Left lung (tissue), 14 donors: ENCODE measurements at regions of chr21 and their contacts with region 1.

Region 1: GRCh38 chr21:32257962-32258785 is 20.7 kb downstream of the MIS18A start:
- DNase-seq: peak in 3 of 4 donors; percentile 50 to 85 (median 67)
- ATAC-seq: peak; percentile 95
- H3K4me3 ChIP-seq: no peak overlapping the region
- H3K27ac ChIP-seq: no peak overlapping the region
- H3K4me1 ChIP-seq: no peaks in the 10 kb centered on the region
- H3K27me3 ChIP-seq: no peaks in the 10 kb centered on the region
- CTCF ChIP-seq: peak; percentile 51 to 61

Region 2: DNA sequence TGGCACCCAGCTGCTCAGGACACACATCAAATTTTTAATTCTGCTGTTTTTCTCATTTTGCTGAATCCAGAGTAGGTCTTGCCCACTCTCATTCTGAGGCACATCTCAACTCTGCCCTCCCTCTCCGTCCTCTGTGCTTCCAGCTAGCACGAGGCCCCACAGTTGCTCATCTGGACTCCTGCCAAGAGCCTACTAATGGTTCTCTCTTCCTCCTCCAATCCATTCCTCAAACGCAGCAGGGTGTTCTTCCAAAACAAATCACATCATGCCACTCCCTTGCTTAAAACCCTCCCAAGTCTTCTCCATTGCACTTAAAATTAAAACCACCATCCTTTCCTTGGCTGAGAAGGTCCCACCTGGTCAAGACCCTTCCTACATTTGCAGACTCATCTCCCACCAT is 476.4 kb before region 1 on chr21:
- intact Hi-C with region 1: loop called in 1 of 2 experiments (anchors 10 kb)
- DNase-seq: peak in 2 of 4 donors; percentile 39 to 64
- ATAC-seq: peak; percentile 13
- H3K4me3 ChIP-seq: no peak overlapping the region
- H3K27ac ChIP-seq: no peak overlapping the region
- H3K4me1 ChIP-seq: no peaks in the 10 kb centered on the region
- H3K27me3 ChIP-seq: no peaks in the 10 kb centered on the region
- CTCF ChIP-seq: no peak

Region 3: DNA sequence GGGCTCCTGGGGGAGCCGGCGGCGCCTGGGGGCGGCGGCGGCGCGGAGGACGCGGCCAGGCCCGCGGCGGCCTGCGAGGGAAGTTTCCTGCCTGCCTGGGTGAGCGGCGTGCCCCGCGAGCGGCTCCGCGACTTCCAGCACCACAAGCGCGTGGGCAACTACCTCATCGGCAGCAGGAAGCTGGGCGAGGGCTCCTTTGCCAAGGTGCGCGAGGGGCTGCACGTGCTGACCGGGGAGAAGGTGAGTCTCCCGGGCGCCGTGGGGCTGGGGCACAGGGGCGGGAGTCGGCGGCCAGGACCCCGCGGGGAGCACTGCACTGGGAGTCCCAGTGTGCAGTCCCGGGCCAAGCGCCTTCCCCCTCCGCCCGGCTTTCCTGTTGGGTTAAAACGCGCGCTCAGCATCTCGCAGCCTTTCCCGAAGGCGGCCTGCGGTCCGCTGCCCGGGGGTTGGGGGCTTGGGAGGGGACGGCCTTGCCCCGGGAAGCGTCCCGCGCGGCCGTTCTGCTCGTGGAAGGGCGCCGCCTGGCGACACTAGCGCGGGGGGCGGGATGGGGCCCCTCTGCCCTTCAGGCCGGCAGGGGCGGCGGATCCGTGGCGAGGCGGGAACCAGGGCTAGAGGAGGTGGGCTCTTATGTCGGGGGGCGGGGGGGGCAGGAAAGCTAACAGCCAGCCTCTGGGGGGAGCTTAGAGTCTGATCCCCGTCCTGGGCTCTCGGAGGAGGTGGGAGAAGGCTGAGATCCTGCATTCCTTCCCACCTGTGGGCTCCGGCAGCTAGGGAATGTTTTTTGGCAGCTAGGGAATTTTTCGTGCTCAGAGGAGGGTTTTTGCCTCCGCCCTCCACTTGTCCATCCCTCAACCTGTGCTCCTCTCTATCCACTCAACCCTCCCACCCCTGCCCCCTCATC is 384.2 kb before region 1 on chr21:
- intact Hi-C with region 1: loop called in 1 of 2 experiments (anchors 5 kb)
- DNase-seq: peak in 3 of 4 donors; percentile 46 to 87 (median 68)
- ATAC-seq: peak; percentile 61
- H3K4me3 ChIP-seq: peak overlapping the region; percentile 44 to 48
- H3K27ac ChIP-seq: no peak overlapping the region
- H3K4me1 ChIP-seq: peaks cover 0 to 21% of the 10 kb centered on the region in 2 donors
- H3K27me3 ChIP-seq: peaks cover 14 to 75% of the 10 kb centered on the region in 2 donors
- CTCF ChIP-seq: peak; percentile 53 to 55

Region 4: GRCh38 chr21:31991356-31992331 is 266.5 kb before region 1 on chr21:
- intact Hi-C with region 1: no loop called
- DNase-seq: no peak
- ATAC-seq: no peak
- H3K4me3 ChIP-seq: no peak overlapping the region
- H3K27ac ChIP-seq: no peak overlapping the region
- H3K4me1 ChIP-seq: no peaks in the 10 kb centered on the region
- H3K27me3 ChIP-seq: no peaks in the 10 kb centered on the region
- CTCF ChIP-seq: no peak

Region 5: DNA sequence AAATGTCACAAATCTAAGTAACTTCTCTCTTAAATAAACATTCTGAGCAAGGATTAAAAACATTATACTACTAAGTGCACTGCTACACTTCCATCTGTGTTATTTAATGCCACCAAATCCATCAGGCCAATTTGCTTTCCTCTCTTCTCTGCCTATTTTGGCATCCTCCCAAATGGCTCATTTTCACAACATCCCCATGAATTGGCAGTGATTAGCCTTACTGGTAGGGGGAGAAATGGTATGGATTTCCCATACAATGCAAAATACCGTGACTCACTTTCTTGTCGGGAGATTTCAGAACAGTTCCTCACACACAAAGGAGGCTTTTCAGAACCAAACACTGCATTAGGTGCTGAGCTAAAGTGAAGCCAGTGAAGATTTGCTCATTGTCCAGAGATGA is 175.0 kb before region 1 on chr21:
- intact Hi-C with region 1: no loop called
- DNase-seq: peak in 2 of 4 donors; percentile 42 to 57
- ATAC-seq: no peak
- H3K4me3 ChIP-seq: no peak overlapping the region
- H3K27ac ChIP-seq: no peak overlapping the region
- H3K4me1 ChIP-seq: no peaks in the 10 kb centered on the region
- H3K27me3 ChIP-seq: no peaks in the 10 kb centered on the region
- CTCF ChIP-seq: no peak

Region 6: DNA sequence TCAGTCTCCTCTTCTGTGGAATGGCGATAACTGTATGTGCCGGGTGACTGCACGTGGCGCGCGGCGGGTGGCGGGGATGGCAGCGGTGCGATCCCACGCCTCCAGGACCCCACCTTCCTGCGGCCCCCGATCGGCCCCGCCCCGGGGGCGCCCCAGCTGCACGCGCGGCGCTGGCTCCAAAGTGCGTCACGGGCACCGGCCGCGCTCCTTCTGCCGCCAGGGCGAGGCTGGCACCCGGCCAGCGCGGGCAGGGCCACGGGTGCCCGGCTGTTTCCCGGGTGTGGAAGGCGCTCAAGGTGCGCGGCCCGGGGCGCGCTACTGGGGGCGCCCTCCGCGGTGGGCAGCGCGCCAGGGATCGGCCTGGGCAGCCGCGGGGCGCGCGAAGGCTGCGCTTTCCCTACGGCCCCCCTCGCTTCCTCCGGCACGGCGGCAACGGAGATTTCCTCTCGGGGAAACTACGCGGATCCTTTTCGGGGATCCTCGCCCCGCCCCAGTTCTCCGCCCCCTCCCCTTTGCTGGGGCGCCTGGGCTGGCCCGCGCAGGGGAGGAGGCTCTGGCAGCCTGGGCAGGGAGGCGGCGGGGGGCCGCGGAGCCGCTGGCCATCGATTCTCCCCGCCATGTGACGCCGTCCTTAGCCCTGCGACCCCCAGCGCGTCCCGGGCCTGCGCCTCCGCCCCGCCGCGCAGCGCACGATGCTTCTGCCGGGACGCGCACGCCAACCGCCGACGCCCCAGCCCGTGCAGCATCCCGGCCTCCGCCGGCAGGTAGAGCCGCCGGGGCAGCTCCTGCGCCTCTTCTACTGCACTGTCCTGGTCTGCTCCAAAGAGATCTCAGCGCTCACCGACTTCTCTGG is 154.2 kb after region 1 on chr21 and contains the start of gene EVA1C:
- intact Hi-C with region 1: no loop called
- DNase-seq: peak in 3 of 4 donors; percentile 46 to 88 (median 55)
- ATAC-seq: peak; percentile 57
- H3K4me3 ChIP-seq: peak within 1 kb of the TSS; percentile 74 to 75
- H3K27ac ChIP-seq: peak within 1 kb of the TSS; percentile 96 to 98
- H3K4me1 ChIP-seq: peaks cover 17 to 44% of the 10 kb centered on the region in 2 donors
- H3K27me3 ChIP-seq: peaks cover 0 to 26% of the 10 kb centered on the region in 2 donors
- CTCF ChIP-seq: no peak
- polyA plus RNA-seq, gene EVA1C: 2.9 to 5.0 (median 3.8) TPM